ENCODE measurements at regions of chr3 and their contacts with region 1.

Region 1: GRCh38 chr3:121834696-121835464 is at the starts of genes EAF2 and IQCB1:
- DNase-seq: peak; percentile 98
- ATAC-seq: peak; percentile 100
- total RNA-seq, gene EAF2: 2.6 TPM
- total RNA-seq, gene IQCB1: 7.5 TPM

Region 2: DNA sequence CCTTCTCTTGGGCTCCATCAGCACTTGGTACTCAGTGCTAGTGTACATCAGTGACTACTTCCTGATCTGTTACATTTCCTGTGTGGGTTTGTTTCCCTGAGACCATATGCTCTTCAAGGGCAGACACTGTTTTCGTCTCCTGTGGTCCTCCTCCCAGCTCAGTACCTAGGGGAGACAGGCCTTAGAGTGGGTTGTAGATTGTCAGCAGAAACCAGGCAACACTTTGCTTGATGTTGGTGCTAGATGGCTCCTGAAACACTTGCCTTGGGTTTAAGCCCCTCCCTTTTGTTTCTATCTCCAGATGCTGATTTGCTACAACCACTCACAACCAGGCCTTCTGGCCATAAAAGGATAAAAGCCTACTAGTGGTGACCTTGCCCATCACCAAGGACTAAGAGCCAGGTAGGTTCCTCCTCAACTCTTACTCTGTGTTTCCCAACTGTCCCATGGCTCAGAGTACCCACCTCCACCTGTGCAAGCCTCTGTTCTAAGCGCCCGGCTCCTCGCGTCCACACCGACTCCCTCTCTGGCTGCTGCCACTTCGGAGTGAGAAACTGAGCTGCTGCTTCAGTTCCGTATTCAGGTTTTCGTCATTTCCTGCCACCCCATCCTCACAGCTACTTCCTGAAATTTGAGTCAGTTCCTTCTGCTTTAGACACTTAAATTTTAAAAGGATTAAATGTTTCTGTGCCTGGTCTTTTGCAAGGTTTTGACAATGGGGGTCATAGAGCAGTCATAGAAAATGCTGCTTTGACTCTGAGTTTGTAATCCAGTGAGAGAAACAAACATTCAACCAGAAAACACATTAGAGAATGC is 174.3 kb before region 1 on chr3 and contains the start of gene HCLS1:
- intact Hi-C with region 1: loop called (anchors 10 kb)
- DNase-seq: peak; percentile 69
- ATAC-seq: peak; percentile 47
- total RNA-seq, gene HCLS1: 9.6 TPM

Region 3: DNA sequence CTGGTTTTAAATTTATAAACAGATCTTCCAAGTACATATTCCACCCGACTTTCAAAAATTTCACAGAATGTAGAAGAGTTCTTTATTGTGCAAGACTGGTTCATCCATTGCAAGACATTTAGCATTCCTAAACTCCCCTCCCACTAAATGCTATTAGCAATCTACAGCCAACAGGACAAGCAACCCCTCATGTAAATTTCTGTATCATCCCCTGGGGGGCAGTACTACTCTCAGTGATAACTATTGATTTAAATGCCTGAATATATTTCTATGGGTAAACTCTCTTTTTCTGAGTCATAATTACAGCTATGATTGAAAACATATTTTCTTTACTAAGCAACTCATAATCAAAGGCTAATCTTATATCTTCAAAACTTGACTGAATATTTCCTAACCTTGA is 48.6 kb after region 1 on chr3:
- intact Hi-C with region 1: loop called (anchors 2 kb)
- DNase-seq: no peak
- ATAC-seq: no peak